Heart left ventricle (tissue), 16 donors: ENCODE measurements at regions of chr1 and their contacts with region 1.

Region 1: DNA sequence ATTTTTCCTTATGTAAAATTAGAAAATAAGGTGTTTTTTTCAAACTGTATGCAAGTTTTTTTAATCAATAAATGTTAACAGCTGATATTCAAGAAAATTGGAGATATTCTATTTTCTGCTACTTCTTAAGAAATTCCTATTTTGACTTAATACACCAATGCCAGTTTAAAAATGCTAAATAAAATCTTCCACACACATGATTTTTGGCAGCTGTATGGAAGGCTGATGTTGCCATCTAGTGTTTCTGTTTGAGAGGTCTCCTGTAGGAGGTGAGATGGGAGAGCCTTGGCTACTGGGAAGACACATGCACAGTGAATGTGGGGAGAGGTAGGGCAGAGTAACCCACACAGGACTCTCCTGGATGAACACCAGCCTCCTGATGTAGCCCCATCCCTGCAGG is 29.2 kb upstream of the OR2B11 start:
- DNase-seq: no peak
- ATAC-seq: peak in 3 of 4 donors; percentile 58 to 70 (median 69)
- H3K4me3 ChIP-seq: no peak overlapping the region
- H3K27ac ChIP-seq: no peak overlapping the region
- H3K4me1 ChIP-seq: no peaks in the 10 kb centered on the region
- H3K27me3 ChIP-seq: peaks cover 0 to 23% (median 0%) of the 10 kb centered on the region in 9 donors
- CTCF ChIP-seq: peak in 11 of 12 donors; percentile 23 to 60 (median 45)
- POLR2A ChIP-seq: no peak

Region 2: DNA sequence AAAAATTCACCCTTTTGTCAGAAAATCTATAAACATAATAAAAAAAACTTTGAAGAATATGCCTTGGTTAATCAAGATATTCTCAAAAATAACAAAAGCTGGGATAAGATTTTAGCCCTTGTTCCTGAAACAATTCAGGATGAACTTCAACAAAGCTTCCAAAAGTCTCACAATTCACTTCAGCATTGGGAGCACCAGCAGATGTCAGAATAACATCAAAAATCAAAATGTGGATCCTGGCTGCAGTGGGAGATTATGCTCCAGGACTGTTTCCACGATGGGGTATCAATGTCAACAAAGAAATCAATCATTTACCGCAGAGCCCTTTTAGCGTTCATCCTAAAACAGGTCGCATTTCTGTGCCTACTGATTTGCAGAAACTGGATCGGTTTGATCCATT is 443.7 kb before region 1 on chr1:
- intact Hi-C with region 1: loop called in 1 of 10 experiments (anchors 10 kb)
- DNase-seq: no peak
- ATAC-seq: no peak
- H3K4me3 ChIP-seq: no peak overlapping the region
- H3K27ac ChIP-seq: no peak overlapping the region
- H3K4me1 ChIP-seq: no peaks in the 10 kb centered on the region
- H3K27me3 ChIP-seq: no peaks in the 10 kb centered on the region
- CTCF ChIP-seq: peak in 8 of 12 donors; percentile 11 to 51 (median 30)
- POLR2A ChIP-seq: no peak

Region 3: GRCh38 chr1:247373721-247374141 is 113.3 kb before region 1 on chr1:
- intact Hi-C with region 1: loop called in 1 of 10 experiments (anchors 5 kb)
- DNase-seq: peak in 4 of 5 donors; percentile 37 to 68 (median 62)
- ATAC-seq: peak in 3 of 4 donors; percentile 54 to 81 (median 68)
- H3K4me3 ChIP-seq: peak overlapping the region in 10 of 12 donors; percentile 29 to 63 (median 40)
- H3K27ac ChIP-seq: no peak overlapping the region
- H3K4me1 ChIP-seq: peaks cover 0 to 8% (median 0%) of the 10 kb centered on the region in 12 donors
- H3K27me3 ChIP-seq: peaks cover 0 to 8% (median 0%) of the 10 kb centered on the region in 9 donors
- CTCF ChIP-seq: peak; percentile 20 to 60 (median 48)
- POLR2A ChIP-seq: no peak

Region 4: GRCh38 chr1:247390116-247390791 is 96.8 kb before region 1 on chr1:
- intact Hi-C with region 1: loop called (anchors 1 to 5 kb)
- DNase-seq: peak; percentile 69 to 78 (median 75)
- ATAC-seq: peak; percentile 88 to 96 (median 92)
- H3K4me3 ChIP-seq: peak overlapping the region in 7 of 12 donors; percentile 8 to 46 (median 36)
- H3K27ac ChIP-seq: peak overlapping the region in 2 of 12 donors; percentile 38 to 76
- H3K4me1 ChIP-seq: peaks cover 0 to 26% (median 0%) of the 10 kb centered on the region in 12 donors
- H3K27me3 ChIP-seq: peaks cover 0 to 10% (median 0%) of the 10 kb centered on the region in 9 donors
- CTCF ChIP-seq: peak in 11 of 12 donors; percentile 70 to 94 (median 82)
- POLR2A ChIP-seq: no peak

Region 5: GRCh38 chr1:247562198-247562597 is 75.1 kb after region 1 on chr1:
- intact Hi-C with region 1: no loop called
- DNase-seq: no peak
- ATAC-seq: no peak
- H3K4me3 ChIP-seq: no peak overlapping the region
- H3K27ac ChIP-seq: no peak overlapping the region
- H3K4me1 ChIP-seq: no peaks in the 10 kb centered on the region
- H3K27me3 ChIP-seq: no peaks in the 10 kb centered on the region
- CTCF ChIP-seq: no peak
- POLR2A ChIP-seq: no peak